PC-9 (cell line): ENCODE measurements at regions of chr1 and their contacts with region 1.

Region 1: GRCh38 chr1:235024711-235025421 is 103.8 kb downstream of the TOMM20 start:
- DNase-seq: no peak
- H3K4me3 ChIP-seq: no peak overlapping the region
- H3K27ac ChIP-seq: no peak overlapping the region
- H3K4me1 ChIP-seq: peaks cover 22% of the 10 kb centered on the region
- H3K27me3 ChIP-seq: no peaks in the 10 kb centered on the region
- CTCF ChIP-seq: no peak

Region 2: DNA sequence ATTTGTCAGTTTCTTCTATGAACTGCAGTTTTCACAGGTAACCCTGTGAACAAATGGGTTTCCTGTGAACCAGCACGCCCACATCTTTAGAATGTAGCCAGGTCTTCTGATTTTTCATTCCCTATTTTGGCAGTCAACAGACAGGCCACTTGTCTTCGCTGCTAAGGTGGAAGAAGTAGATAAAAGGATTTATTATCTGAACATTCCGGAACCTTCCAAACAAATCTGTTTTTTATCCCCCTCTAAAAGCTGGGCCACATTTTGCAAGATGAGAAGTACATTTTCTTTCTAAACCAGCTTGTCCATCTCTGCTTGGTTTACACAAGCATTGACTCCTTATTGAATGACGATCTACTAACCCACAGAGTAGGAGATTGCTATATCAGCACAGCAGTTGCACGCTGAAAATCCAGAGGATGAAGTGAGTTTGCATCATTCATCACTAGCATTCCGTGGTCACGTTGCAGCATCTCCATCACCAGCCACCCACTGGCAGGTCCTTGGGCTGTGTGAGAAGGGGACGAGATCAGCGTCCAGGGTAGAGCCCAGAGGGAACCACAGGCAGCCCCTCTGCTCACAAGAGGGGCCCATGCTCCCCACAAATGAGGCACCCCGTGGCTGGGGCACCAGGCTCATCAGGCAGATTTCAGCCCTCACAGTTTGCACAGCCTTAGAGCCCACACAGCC is 20.3 kb after region 1 on chr1:
- CTCF ChIA-PET with region 1: interaction called, 13 read pairs
- POLR2A ChIA-PET with region 1: interaction called, 4 read pairs
- intact Hi-C with region 1: no loop called
- DNase-seq: no peak
- H3K4me3 ChIP-seq: no peak overlapping the region
- H3K27ac ChIP-seq: no peak overlapping the region
- H3K4me1 ChIP-seq: peaks cover 10% of the 10 kb centered on the region; the same call in 1 of the 2 replicates
- H3K27me3 ChIP-seq: no peaks in the 10 kb centered on the region
- CTCF ChIP-seq: no peak

Region 3: DNA sequence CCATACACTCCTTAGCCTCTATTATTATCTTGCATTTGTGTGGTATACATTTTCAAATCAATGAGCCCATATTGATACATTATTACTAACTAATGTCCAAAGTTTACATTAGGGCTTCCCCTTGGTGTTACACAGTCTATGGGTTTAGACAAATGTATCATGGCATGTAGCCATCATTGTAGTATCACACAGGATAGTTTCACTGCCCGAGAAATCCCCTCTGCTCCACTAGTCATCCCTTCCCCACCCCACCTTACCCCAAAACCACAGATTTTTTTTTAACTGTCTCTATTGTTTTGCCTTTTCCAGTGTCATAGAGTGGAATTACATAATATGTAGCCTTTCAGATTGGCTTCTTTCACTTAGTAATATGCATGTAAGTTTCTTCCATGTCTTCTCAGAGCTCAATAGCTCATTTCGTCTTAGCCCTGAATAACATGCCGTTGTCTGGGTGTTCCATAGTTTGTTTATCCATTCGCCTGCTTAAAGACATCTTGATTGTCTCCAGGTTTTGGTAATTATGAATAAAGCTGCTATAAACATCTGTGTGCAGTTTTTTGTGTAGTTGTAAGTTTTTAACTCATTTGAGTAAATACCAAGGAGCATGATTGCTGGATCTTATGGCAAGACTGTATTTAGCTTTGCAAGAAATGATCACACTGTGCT is 928.2 kb after region 1 on chr1:
- CTCF ChIA-PET with region 1: interaction called, 10 read pairs
- POLR2A ChIA-PET with region 1: no interaction called
- intact Hi-C with region 1: no loop called
- DNase-seq: no peak
- H3K4me3 ChIP-seq: no peak overlapping the region
- H3K27ac ChIP-seq: no peak overlapping the region
- H3K4me1 ChIP-seq: peaks cover 12% of the 10 kb centered on the region; the same call in 1 of the 2 replicates
- H3K27me3 ChIP-seq: no peaks in the 10 kb centered on the region
- CTCF ChIP-seq: no peak